CD8-positive, alpha-beta T cell (primary cell): ENCODE measurements at regions of chr12 and their contacts with region 1.

Region 1: DNA sequence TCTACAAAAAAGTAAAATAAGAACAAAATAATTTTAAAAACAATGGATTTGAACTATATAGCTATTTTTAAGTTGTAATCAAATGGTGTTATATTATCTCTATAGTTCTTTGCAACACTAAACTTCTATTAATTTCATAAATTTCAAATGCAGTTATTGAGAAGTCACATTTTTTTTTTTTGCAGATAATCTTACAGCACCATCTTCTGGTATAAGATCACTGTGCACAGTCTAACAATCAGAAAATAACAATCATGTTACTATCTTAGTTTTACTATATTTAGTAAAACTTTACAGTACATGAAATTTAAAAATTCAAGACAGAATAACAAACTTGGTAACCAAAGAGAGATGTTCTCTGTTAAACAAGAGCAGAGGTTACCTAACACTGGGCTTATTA is 40.6 kb downstream of the GXYLT1 start:
- DNase-seq: no peak
- ATAC-seq: peak; percentile 55
- H3K4me3 ChIP-seq: no peak overlapping the region
- H3K4me3 Mint-ChIP-seq: no peak overlapping the region
- H3K27ac ChIP-seq: no peak overlapping the region
- H3K27ac Mint-ChIP-seq: peak overlapping the region; percentile 7
- H3K4me1 ChIP-seq: no peaks in the 10 kb centered on the region
- H3K4me1 Mint-ChIP-seq: peaks cover 2% of the 10 kb centered on the region
- H3K27me3 ChIP-seq: no peaks in the 10 kb centered on the region
- H3K27me3 Mint-ChIP-seq: no peaks in the 10 kb centered on the region
- CTCF ChIP-seq: peak; percentile 71

Region 2: DNA sequence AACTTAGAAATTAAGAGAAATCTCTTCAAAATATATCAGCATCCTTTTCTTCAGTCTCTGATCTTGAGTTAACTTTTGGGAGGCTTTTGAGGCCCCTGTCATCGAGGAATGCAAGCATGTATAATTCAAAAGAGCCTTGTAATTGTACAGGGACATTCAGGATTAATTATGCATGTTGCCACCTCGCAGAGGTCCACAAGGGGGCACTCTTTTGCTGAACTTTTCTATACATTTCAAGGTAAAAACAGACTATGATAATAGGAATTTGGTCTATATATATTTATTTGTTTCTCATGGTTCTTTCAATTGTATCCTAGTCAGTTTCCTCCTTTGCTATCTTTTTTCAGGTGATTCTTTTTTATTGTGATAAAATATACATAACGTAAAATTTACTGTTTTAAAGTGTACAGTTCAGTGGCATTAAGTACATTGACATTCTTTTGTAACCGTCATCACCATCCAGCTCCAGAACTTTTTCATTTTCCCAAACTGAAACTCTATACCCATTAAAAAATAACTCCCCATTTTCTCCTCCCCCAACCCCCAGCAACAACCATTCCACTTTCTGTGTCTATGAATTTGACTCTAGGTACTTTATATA is 1951.2 kb before region 1 on chr12:
- CTCF ChIA-PET with region 1: no interaction called
- POLR2A ChIA-PET with region 1: no interaction called
- intact Hi-C with region 1: loop called in 1 of 2 experiments (anchors 10 kb)
- DNase-seq: peak; percentile 3 to 58 (median 36)
- ATAC-seq: no peak
- H3K4me3 ChIP-seq: no peak overlapping the region
- H3K4me3 Mint-ChIP-seq: no peak overlapping the region
- H3K27ac ChIP-seq: no peak overlapping the region
- H3K27ac Mint-ChIP-seq: no peak overlapping the region
- H3K4me1 ChIP-seq: no peaks in the 10 kb centered on the region
- H3K4me1 Mint-ChIP-seq: no peaks in the 10 kb centered on the region
- H3K27me3 ChIP-seq: no peaks in the 10 kb centered on the region
- H3K27me3 Mint-ChIP-seq: peaks cover 6% of the 10 kb centered on the region
- CTCF ChIP-seq: peak; percentile 97

Region 3: DNA sequence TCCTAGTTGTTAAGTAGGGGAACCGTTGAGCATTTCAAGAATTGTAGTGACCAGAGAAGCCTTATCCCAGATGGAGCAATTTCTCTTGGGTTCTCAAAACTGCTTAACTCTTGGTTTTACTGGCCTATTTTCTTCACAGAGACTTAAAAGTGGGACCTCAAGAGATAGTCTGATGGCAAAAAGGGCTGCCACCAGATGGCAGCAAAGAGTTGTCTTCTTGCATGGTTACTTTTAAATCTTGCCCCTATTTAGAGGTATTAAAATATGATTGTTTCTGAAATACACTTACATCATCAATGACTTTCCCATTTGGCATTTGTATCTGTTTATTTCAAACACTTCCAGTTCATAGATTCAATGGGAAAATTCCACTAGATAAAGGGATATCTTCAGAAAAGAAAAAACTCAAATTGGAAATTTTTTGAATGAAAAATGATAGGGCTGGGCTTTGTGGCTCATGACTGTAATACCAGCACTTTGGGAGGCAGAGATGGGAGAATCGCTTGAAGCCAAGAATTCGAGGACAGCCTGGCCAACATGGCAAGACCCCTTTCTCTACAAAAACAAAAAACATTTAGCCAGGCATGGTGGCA is 1481.7 kb before region 1 on chr12:
- CTCF ChIA-PET with region 1: no interaction called
- POLR2A ChIA-PET with region 1: no interaction called
- intact Hi-C with region 1: loop called in 1 of 2 experiments (anchors 10 kb)
- DNase-seq: peak in 4 of 9 experiments; percentile 6 to 26 (median 18)
- ATAC-seq: no peak
- H3K4me3 ChIP-seq: no peak overlapping the region
- H3K4me3 Mint-ChIP-seq: no peak overlapping the region
- H3K27ac ChIP-seq: no peak overlapping the region
- H3K27ac Mint-ChIP-seq: no peak overlapping the region
- H3K4me1 ChIP-seq: no peaks in the 10 kb centered on the region
- H3K4me1 Mint-ChIP-seq: no peaks in the 10 kb centered on the region
- H3K27me3 ChIP-seq: peaks cover 0 to 5% of the 10 kb centered on the region in 2 experiments
- H3K27me3 Mint-ChIP-seq: no peaks in the 10 kb centered on the region
- CTCF ChIP-seq: peak; percentile 37

Region 4: DNA sequence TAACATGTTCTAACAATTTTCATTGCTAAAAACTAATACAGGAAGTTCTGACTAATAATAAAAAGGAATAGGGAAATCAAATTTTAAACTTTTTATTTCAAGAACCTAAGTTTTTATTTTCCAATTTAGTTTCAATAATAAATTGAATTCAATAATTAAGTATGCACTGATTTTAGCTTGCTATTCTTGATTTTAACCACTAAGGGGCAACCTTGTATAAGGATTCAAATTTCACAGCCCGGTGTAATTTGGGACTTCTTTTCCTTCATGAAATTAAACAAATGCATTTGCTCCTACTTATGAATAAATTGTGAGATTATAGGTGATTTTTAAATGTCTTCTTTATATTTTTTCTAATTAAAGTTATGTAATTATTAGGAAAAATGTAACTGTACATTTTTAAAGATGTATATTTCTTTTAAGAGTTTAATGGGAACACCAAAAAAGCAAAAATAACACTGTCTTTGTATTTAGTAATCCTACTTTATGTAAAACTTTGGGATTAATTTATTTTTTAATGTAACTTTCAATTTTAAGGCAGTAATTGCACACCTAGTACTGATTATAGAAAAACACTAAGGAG is 1157.4 kb before region 1 on chr12:
- CTCF ChIA-PET with region 1: no interaction called
- POLR2A ChIA-PET with region 1: no interaction called
- intact Hi-C with region 1: loop called in 1 of 2 experiments (anchors 5 kb)
- DNase-seq: peak in 2 of 9 experiments; percentile 17 to 33
- ATAC-seq: no peak
- H3K4me3 ChIP-seq: no peak overlapping the region
- H3K4me3 Mint-ChIP-seq: no peak overlapping the region
- H3K27ac ChIP-seq: no peak overlapping the region
- H3K27ac Mint-ChIP-seq: no peak overlapping the region
- H3K4me1 ChIP-seq: no peaks in the 10 kb centered on the region
- H3K4me1 Mint-ChIP-seq: no peaks in the 10 kb centered on the region
- H3K27me3 ChIP-seq: no peaks in the 10 kb centered on the region
- H3K27me3 Mint-ChIP-seq: no peaks in the 10 kb centered on the region
- CTCF ChIP-seq: peak; percentile 61

Region 5: GRCh38 chr12:40963751-40964150 is 1140.3 kb before region 1 on chr12:
- CTCF ChIA-PET with region 1: no interaction called
- POLR2A ChIA-PET with region 1: no interaction called
- intact Hi-C with region 1: no loop called
- DNase-seq: no peak
- ATAC-seq: no peak
- H3K4me3 ChIP-seq: no peak overlapping the region
- H3K4me3 Mint-ChIP-seq: no peak overlapping the region
- H3K27ac ChIP-seq: no peak overlapping the region
- H3K27ac Mint-ChIP-seq: no peak overlapping the region
- H3K4me1 ChIP-seq: no peaks in the 10 kb centered on the region
- H3K4me1 Mint-ChIP-seq: no peaks in the 10 kb centered on the region
- H3K27me3 ChIP-seq: no peaks in the 10 kb centered on the region
- H3K27me3 Mint-ChIP-seq: no peaks in the 10 kb centered on the region
- CTCF ChIP-seq: no peak

Region 6: DNA sequence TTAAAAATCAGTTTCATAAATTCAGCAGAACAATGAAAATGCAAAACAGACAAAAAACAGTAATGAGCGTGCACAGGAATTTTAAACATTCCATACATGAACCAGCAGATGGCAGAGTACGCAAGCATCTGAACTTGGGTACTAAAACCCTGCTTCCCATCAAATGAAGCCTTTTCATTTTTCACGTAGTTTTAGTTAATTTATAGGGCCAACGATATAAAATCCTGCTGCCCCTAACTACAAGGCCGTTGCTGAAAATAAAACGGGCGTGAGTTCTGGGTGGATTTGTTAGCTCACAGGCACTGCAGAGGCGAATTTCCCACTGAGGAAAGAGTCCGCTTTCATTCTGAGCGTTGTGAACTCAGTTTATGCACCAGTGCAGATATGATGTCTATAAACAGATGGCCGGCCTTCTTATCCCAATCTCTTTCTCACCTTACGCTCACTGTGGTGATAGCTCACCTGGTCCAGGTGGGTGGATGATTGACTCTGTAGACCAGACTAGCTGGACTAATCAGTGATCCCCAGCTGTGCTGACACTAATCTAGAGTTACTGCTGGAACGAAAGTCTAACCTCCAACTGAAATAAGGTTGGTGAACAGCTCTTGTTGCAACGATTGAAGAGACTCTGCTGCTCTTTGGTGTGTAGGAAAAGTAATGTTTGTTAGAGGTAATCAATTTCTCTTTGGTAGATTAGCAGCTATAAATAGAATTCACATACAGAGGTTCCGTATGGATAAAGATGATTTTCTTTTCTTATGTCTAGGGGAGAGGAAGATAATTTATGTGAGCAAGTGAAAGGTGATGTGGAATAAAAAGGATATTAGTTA is 826.8 kb before region 1 on chr12:
- CTCF ChIA-PET with region 1: no interaction called
- POLR2A ChIA-PET with region 1: no interaction called
- intact Hi-C with region 1: loop called (anchors 2 to 5 kb)
- DNase-seq: peak in 2 of 9 experiments; percentile 13 to 33
- ATAC-seq: no peak
- H3K4me3 ChIP-seq: no peak overlapping the region
- H3K4me3 Mint-ChIP-seq: no peak overlapping the region
- H3K27ac ChIP-seq: no peak overlapping the region
- H3K27ac Mint-ChIP-seq: no peak overlapping the region
- H3K4me1 ChIP-seq: no peaks in the 10 kb centered on the region
- H3K4me1 Mint-ChIP-seq: no peaks in the 10 kb centered on the region
- H3K27me3 ChIP-seq: no peaks in the 10 kb centered on the region
- H3K27me3 Mint-ChIP-seq: peaks cover 3% of the 10 kb centered on the region
- CTCF ChIP-seq: peak; percentile 37

Region 7: DNA sequence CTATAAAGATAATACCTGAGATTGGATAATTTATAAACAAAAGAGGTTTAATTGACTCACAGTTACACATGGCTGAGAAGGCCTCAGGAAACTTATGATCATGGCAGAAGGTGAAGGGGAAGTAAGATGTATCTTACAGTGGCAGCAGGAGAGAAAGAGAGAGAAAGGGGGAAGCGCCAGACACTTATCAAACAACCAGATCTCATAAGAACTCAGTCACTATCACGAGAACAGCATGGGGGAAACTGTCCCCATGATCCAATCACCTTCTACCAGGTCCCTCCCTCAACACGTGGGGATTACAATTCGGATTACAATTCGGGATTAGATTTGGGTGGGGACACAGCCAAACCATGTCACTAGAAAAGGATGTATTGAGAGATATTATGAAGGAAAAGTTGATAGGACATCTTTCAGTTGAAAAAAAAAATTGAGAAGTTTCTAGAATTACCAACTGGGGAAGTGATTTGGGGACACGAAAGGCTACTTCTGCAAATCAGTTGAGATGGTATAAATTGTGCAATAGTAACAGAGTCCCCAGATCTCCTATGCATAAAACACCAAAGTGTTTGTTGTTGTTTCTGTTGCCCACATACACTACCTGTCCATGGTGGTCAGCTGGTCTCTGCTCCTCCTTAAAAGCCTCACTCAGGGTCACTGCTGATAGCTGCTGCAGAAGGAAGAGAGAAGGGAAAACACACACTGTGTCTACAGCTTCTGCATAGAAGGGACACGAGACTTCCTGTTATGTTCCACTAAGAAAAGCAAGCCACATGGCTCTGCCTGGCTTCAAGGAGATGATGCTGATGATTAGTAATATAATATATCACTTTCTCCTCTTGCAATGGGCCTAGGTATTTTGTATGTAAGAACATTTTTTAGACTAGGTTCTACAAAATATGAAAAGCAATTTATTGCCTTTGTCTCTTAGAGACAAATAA is 450.4 kb before region 1 on chr12:
- CTCF ChIA-PET with region 1: no interaction called
- POLR2A ChIA-PET with region 1: no interaction called
- intact Hi-C with region 1: no loop called
- DNase-seq: no peak
- ATAC-seq: no peak
- H3K4me3 ChIP-seq: no peak overlapping the region
- H3K4me3 Mint-ChIP-seq: no peak overlapping the region
- H3K27ac ChIP-seq: no peak overlapping the region
- H3K27ac Mint-ChIP-seq: no peak overlapping the region
- H3K4me1 ChIP-seq: no peaks in the 10 kb centered on the region
- H3K4me1 Mint-ChIP-seq: no peaks in the 10 kb centered on the region
- H3K27me3 ChIP-seq: no peaks in the 10 kb centered on the region
- H3K27me3 Mint-ChIP-seq: no peaks in the 10 kb centered on the region
- CTCF ChIP-seq: no peak

Region 8: DNA sequence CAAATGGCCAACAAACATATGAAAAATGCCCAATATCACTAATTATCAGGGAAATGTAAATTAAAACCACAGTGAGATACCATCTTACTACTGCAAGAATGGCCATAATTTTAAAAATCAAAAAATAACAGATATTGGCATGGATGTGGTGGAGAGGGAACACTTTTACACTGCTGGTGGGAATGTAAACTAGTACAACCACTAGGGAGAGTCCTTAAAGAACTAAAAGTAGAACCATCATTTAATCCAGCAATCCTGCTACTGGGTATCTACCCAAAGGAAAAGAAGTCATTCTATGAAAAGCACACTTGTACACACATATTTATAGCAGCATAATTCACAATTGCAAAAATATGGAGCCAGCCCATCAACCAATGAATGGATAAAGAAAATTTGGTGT is 419.1 kb before region 1 on chr12:
- CTCF ChIA-PET with region 1: no interaction called
- POLR2A ChIA-PET with region 1: no interaction called
- intact Hi-C with region 1: loop called (anchors 5 kb)
- DNase-seq: no peak
- ATAC-seq: no peak
- H3K4me3 ChIP-seq: no peak overlapping the region
- H3K4me3 Mint-ChIP-seq: no peak overlapping the region
- H3K27ac ChIP-seq: no peak overlapping the region
- H3K27ac Mint-ChIP-seq: no peak overlapping the region
- H3K4me1 ChIP-seq: no peaks in the 10 kb centered on the region
- H3K4me1 Mint-ChIP-seq: no peaks in the 10 kb centered on the region
- H3K27me3 ChIP-seq: no peaks in the 10 kb centered on the region
- H3K27me3 Mint-ChIP-seq: no peaks in the 10 kb centered on the region
- CTCF ChIP-seq: no peak